OCI-LY7 (cell line): ENCODE measurements at regions of chr10 and their contacts with region 1.

Region 1: DNA sequence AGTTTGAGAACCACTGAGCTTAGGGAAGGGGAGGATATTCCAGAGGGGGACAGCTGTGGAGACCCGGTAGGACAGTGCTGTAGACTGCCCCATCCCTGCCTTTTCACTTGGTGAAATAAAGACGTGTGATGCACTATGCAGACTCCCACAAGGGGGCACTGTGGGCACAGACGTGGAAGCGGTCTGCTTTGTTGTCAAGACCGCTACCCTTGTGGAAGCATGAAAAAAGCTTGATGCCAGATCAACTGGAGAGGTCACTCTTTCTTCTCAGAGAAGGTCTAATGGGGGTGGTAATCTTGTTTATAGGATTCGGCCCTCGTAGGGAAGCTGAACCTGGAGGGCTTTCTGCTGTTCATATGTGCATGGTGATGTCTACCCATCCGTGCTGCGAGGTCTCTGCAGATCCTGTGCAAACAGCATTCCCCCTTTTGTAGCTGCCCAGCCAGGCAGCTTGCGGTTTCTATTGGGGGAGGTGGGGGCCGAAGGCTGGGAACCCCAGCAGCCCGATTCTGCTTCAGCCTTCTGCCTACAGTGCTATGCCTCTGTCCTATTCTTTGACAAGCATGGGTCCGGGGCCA is 13.7 kb downstream of the RPS24 start:
- DNase-seq: peak; percentile 86
- H3K4me3 ChIP-seq: no peak overlapping the region
- H3K27ac ChIP-seq: no peak overlapping the region
- H3K4me1 ChIP-seq: peaks cover 27% of the 10 kb centered on the region
- CTCF ChIP-seq: peak; percentile 88

Region 2: GRCh38 chr10:78071140-78071856 is 23.9 kb after region 1 on chr10:
- CTCF ChIA-PET with region 1: no interaction called
- POLR2A ChIA-PET with region 1: no interaction called
- intact Hi-C with region 1: no loop called
- DNase-seq: no peak
- H3K4me3 ChIP-seq: no peak overlapping the region
- H3K27ac ChIP-seq: no peak overlapping the region
- H3K4me1 ChIP-seq: no peaks in the 10 kb centered on the region
- CTCF ChIP-seq: no peak

Region 3: GRCh38 chr10:78437998-78438906 is 390.8 kb after region 1 on chr10:
- CTCF ChIA-PET with region 1: no interaction called
- POLR2A ChIA-PET with region 1: no interaction called
- intact Hi-C with region 1: loop called (anchors 5 kb)
- DNase-seq: peak; percentile 20
- H3K4me3 ChIP-seq: no peak overlapping the region
- H3K27ac ChIP-seq: no peak overlapping the region
- H3K4me1 ChIP-seq: peaks cover 7% of the 10 kb centered on the region
- CTCF ChIP-seq: peak; percentile 59

Region 4: DNA sequence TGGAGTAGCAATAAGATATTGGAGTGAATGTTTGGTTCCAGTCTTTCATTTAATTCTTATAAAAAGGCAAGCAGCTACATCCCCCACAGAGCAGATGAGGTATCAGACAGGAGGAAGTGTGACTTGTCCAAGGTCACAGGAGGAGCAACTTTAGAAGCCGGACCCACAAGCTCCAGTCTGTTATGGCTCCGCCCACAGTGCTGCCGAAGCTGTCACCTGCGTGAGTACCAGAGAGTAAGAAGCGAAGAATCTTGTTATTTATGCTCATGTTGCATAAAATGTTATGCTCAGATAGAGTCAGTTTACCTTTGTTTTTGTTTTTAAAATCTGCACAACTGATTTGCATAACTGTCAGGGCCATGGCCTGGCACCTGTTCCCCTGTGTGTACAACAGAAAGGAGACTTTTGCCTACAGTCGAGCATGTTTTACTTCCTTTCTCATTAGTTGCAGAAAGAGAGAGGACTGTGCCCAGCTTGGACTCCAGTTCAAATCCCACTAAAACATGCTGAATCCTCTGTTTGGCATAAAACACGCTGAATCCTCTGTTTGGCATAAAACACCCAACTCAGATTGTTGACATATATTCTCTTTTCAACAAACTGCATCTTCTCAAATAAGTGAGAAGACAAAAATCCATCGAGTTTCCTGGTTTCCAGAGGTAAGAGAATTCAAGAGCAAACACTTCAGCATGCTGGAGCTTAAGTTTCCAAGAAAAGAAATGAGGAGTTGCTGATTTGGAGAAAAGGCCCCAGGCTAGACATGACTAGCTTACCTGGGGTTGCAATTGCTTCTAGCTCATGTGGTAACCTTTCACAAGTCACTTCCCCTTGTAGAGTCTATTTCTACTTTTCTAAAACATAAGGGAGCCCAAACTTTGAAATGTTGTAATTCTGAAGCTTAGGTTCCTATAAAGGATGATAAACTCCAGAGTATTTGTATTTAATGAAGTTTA is 611.5 kb after region 1 on chr10:
- CTCF ChIA-PET with region 1: no interaction called
- POLR2A ChIA-PET with region 1: interaction called, 3 read pairs
- intact Hi-C with region 1: loop called (anchors 2 kb)
- DNase-seq: peak; percentile 93
- H3K4me3 ChIP-seq: peak overlapping the region; percentile 54
- H3K27ac ChIP-seq: peak overlapping the region; percentile 90
- H3K4me1 ChIP-seq: peaks cover 28% of the 10 kb centered on the region
- CTCF ChIP-seq: no peak